ENCODE measurements at regions of chr16 and their contacts with region 1.

Region 1: DNA sequence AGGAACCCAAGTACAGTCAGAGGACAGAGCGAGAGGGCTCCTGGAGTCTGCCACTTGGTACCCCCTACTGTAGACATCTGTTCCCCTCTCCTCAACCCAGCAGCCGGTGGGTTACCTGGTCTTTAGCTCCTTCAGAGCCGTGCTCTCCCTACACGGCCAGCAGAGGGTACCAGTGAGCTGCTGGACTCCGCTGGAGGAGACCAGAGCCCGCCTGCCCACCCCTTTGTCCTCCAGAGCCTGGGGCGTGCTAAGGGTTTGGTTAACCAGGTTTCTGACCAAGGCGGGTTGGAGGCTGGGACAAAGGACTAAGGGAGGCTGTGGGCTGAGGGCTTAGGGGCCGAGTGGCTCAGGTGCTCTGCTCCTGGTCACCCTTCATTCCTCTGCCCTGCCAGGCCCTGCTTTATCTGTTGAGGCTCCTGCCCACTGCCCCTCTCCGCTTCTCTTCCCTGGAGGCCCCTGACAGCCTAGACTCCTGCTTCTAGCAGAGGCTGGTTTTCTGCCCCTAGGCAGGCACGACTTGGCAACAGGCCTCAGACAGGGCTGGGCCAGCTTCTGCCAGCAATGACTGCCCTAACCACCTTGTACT is 2.7 kb upstream of the HSD11B2 start:
- DNase-seq: peak; percentile 60 to 82 (median 70)
- ATAC-seq: peak; percentile 55 to 85 (median 78)
- H3K4me3 ChIP-seq: no peak overlapping the region
- H3K27ac ChIP-seq: peak overlapping the region in 1 of 12 donors; percentile 18
- H3K4me1 ChIP-seq: peaks cover 0 to 44% (median 15%) of the 10 kb centered on the region in 12 donors
- H3K27me3 ChIP-seq: peaks cover 0 to 35% (median 0%) of the 10 kb centered on the region in 9 donors
- CTCF ChIP-seq: peak; percentile 68 to 92 (median 84)
- POLR2A ChIP-seq: no peak

Region 2: DNA sequence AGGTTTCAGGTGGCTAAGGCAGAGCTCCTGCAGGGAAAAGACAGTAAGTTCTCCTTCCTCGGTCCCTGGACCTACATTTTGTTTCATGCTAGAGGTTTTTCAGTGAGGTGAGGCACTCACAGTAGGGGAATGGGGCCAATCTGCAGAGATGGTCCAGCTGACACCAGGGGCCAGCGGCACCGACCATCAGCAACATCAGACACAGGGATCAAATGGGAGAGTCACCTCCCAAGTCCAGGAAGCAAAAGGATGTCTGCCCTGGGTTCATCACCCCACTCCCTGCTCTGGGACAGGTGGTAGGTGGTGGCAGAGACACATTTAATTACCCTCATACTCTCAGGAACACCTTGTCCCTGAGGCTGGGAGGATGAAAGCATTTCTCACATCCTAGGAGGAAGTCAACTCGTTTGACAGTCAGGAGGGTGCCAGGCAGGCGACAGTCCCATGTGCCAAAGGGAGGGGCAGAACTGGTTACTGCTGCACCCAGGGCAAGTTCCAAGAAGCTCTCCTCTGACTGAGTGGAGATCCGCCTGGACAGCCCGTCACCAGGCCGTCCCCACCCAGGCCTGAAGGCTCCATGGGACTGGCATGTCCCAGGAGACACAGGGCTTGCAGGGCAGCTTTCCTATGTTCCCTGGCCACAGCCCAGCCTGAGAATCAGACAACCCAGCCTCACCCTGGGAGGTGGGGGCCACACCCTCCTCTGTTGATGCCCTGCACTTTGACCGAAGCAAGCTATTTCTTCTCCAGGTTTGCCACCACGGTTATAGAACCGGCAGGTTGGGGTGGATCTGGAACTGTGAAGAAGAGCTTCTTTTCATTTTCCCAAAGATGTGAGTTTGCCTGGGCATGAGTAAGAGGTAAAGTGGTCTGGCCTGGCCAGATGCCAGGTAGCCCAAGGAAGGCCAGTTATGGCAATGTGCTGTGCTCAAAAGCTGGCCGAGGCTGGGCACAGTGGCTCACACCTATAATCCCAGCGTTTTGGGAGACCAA is 33.7 kb after region 1 on chr16:
- intact Hi-C with region 1: loop called (anchors 1 to 5 kb)
- DNase-seq: no peak
- ATAC-seq: no peak
- H3K4me3 ChIP-seq: no peak overlapping the region
- H3K27ac ChIP-seq: no peak overlapping the region
- H3K4me1 ChIP-seq: peaks cover 24 to 94% (median 84%) of the 10 kb centered on the region in 12 donors
- H3K27me3 ChIP-seq: no peaks in the 10 kb centered on the region
- CTCF ChIP-seq: no peak
- POLR2A ChIP-seq: no peak

Region 3: DNA sequence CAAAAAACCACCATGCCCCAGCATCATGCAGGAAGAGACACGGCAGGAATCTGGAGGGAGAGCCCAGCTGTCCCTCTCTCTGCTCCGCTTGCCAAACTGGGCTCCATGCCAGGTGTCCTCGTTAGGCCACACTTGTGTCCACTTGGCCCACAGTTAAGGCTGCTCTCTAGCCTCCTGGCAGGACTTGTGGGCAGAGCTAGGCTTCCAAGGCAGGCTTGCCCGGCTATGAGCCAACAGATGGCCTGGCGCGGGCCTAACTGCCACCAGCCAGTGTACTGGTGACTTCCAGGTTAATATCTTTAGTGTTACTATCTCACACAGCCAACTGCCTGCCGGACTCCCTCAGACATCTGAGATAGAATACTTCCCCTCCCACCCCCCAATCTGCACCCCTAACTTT is 42.1 kb after region 1 on chr16:
- intact Hi-C with region 1: loop called in 9 of 10 experiments (anchors 1 to 5 kb)
- DNase-seq: peak; percentile 88 to 96 (median 92)
- ATAC-seq: peak; percentile 88 to 94 (median 90)
- H3K4me3 ChIP-seq: no peak overlapping the region
- H3K27ac ChIP-seq: peak overlapping the region in 3 of 12 donors; percentile 0 to 31 (median 25)
- H3K4me1 ChIP-seq: peaks cover 0 to 78% (median 45%) of the 10 kb centered on the region in 12 donors
- H3K27me3 ChIP-seq: no peaks in the 10 kb centered on the region
- CTCF ChIP-seq: no peak
- POLR2A ChIP-seq: no peak